K562 (cell line): ENCODE measurements at regions of chr6 and their contacts with region 1.

Region 1: GRCh38 chr6:50816115-50816675 is 2.5 kb upstream of the TFAP2B start:
- DNase-seq: peak; percentile 80 to 94 (median 86)
- ATAC-seq: peak; percentile 98
- H3K4me3 ChIP-seq: peak overlapping the region; percentile 47
- H3K27ac ChIP-seq: peak overlapping the region; percentile 40; the same call in 2 of the 3 replicates
- H3K4me1 ChIP-seq: no peaks in the 10 kb centered on the region
- H3K27me3 ChIP-seq: peaks cover 0 to 3% of the 10 kb centered on the region in 2 experiments; a peak in 1 of 5 replicates
- CTCF ChIP-seq: peak; percentile 86 to 96 (median 88)
- EP300 ChIP-seq: no peak
- POLR2A ChIP-seq: no peak
- RAD21 ChIP-seq: peak; percentile 96 to 98

Region 2: DNA sequence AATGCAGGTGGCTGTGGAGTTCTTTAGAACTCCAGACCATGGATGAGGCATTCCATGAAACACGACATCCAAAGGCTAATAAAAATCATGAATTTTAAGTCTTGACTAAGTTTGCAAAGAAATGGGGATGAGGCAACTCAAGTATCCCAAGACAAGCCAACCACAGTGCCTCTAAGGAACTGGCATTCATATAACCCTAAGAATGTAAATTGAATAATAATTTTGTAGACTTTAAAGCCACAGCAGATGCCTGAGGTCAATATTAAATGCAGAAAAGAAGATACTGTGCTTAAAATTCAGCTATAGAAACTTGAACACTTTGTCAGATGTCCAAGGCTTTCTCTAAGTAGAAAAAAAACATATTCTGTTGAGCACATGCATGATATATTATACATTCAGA is 57.0 kb after region 1 on chr6:
- CTCF ChIA-PET with region 1: no interaction called
- POLR2A ChIA-PET with region 1: no interaction called
- in situ Hi-C with region 1: no loop called
- intact Hi-C with region 1: loop called (anchors 2 kb)
- DNase-seq: no peak
- ATAC-seq: no peak
- H3K4me3 ChIP-seq: no peak overlapping the region
- H3K27ac ChIP-seq: no peak overlapping the region
- H3K4me1 ChIP-seq: peaks cover 0 to 3% of the 10 kb centered on the region in 2 experiments; a peak in 1 of 5 replicates
- H3K27me3 ChIP-seq: no peaks in the 10 kb centered on the region
- CTCF ChIP-seq: no peak
- EP300 ChIP-seq: no peak
- POLR2A ChIP-seq: no peak
- RAD21 ChIP-seq: no peak

Region 3: GRCh38 chr6:51129043-51129442 is 312.8 kb after region 1 on chr6:
- CTCF ChIA-PET with region 1: no interaction called
- POLR2A ChIA-PET with region 1: no interaction called
- in situ Hi-C with region 1: no loop called
- intact Hi-C with region 1: loop called (anchors 5 kb)
- DNase-seq: peak in 3 of 4 experiments; percentile 25 to 61 (median 30)
- ATAC-seq: peak; percentile 95
- H3K4me3 ChIP-seq: no peak overlapping the region
- H3K27ac ChIP-seq: peak overlapping the region; percentile 67
- H3K4me1 ChIP-seq: peaks cover 0 to 13% of the 10 kb centered on the region in 2 experiments; a peak in 2 of 5 replicates
- H3K27me3 ChIP-seq: no peaks in the 10 kb centered on the region
- CTCF ChIP-seq: no peak
- EP300 ChIP-seq: no peak; the same call in 1 of the 2 replicates
- POLR2A ChIP-seq: no peak
- RAD21 ChIP-seq: no peak

Region 4: DNA sequence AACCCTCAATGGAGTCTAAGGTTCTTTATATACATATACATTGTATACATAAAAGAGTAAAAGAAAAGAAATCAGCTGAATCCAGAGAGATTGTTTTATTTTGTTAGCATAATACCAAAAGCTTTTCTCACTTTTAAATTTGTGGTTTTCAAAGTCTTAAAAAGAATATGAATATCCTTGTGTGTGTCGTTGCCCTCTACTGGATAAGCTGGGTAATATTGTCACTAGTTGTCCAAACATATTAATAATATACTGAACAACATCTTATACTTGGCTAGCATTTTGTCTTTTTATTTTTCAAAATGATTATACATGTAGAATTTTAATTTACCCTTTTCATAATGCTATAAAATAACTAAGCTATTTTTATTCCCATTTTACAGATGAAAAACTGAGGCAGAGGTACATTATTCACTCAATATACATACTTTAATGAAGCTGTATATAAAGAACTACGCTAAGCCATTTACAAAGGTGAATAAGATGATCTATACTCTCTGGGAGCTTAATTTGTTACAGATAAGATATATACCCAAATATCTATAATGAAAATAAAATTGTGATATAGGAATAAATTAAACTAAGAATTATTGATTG is 534.2 kb after region 1 on chr6:
- CTCF ChIA-PET with region 1: interaction called, 10 read pairs
- POLR2A ChIA-PET with region 1: no interaction called
- in situ Hi-C with region 1: loop called (anchors 10 kb)
- intact Hi-C with region 1: loop called (anchors 1 kb)
- DNase-seq: peak in 3 of 4 experiments; percentile 22 to 30 (median 27)
- ATAC-seq: peak; percentile 74
- H3K4me3 ChIP-seq: no peak overlapping the region
- H3K27ac ChIP-seq: no peak overlapping the region
- H3K4me1 ChIP-seq: no peaks in the 10 kb centered on the region
- H3K27me3 ChIP-seq: no peaks in the 10 kb centered on the region
- CTCF ChIP-seq: peak in 2 of 3 experiments; percentile 25 to 64; a peak in 3 of 6 replicates
- EP300 ChIP-seq: no peak
- POLR2A ChIP-seq: no peak
- RAD21 ChIP-seq: peak; percentile 56 to 68

Region 5: DNA sequence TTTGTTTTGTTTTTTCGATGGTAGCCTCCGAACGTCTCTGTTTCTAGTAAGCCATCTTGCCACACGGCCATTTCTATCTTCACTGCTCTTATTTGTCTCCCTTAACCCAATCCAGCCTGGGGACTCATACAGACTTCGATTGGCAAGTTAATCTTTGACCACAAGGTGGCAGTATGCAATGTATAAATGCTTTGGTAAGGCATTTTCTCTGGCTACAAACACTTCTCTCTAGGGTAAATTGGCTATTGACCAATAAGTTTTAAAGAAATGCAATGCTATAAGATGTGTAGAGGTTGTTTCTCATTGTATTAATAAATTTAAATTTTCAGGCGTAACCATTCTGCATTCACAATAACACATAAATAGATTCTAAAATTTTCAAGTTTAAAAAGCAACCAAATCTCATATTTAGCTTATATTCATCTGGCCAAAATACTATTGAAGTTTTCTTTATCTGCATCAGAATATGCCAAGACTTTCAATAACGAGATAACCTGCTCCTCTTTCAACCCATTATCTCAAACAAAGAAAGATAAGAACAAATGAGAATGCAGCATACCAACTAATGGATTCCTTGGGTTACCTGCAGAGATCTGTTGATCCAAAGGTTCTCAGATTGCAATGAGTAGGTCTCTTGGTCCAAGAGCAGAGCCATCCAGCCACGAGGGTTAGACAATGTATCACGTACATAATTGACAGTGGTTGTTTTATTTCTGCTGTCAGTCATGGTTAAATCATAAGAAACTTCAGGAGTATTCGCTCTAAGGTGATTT is 1039.3 kb after region 1 on chr6:
- CTCF ChIA-PET with region 1: interaction called, 3 read pairs
- POLR2A ChIA-PET with region 1: no interaction called
- in situ Hi-C with region 1: no loop called
- intact Hi-C with region 1: loop called (anchors 10 kb)
- DNase-seq: peak; percentile 47 to 74 (median 61)
- ATAC-seq: peak; percentile 96
- H3K4me3 ChIP-seq: no peak overlapping the region
- H3K27ac ChIP-seq: no peak overlapping the region
- H3K4me1 ChIP-seq: no peaks in the 10 kb centered on the region
- H3K27me3 ChIP-seq: no peaks in the 10 kb centered on the region
- CTCF ChIP-seq: peak; percentile 66 to 76 (median 69)
- EP300 ChIP-seq: no peak
- POLR2A ChIP-seq: no peak
- RAD21 ChIP-seq: peak; percentile 72 to 74

Region 6: GRCh38 chr6:52020945-52021570 is 1204.9 kb after region 1 on chr6:
- CTCF ChIA-PET with region 1: interaction called, 3 read pairs
- POLR2A ChIA-PET with region 1: no interaction called
- in situ Hi-C with region 1: loop called (anchors 25 kb)
- intact Hi-C with region 1: loop called (anchors 2 kb)
- DNase-seq: peak; percentile 12 to 38 (median 32)
- ATAC-seq: peak; percentile 66; the same call in 1 of the 3 replicates
- H3K4me3 ChIP-seq: no peak overlapping the region
- H3K27ac ChIP-seq: no peak overlapping the region
- H3K4me1 ChIP-seq: no peaks in the 10 kb centered on the region
- H3K27me3 ChIP-seq: peaks cover 0 to 12% of the 10 kb centered on the region in 2 experiments; a peak in 3 of 5 replicates
- CTCF ChIP-seq: peak; percentile 38 to 81 (median 49); a peak in 4 of 6 replicates
- EP300 ChIP-seq: no peak
- POLR2A ChIP-seq: no peak
- RAD21 ChIP-seq: peak; percentile 72 to 86